ENCODE measurements at regions of chr16 and their contacts with region 1.

Region 1: DNA sequence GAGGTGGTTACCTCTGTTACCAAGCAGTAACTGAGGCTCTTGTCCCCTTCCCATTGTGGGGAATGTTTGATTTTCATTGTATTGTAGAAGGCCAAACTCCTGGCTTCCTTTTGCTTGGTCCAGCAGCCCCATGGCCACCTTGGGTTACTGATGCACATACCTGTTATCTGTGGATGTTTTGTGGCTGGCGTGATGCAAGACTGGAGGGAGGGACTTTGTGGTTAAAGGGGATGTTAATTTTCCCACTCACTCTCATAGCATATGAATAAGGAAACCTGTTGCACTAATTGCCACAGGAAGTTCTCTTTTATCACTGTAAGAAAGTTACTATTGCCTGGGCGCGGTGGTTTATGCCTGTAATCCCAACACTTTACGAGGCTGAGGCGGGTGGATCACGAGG is 168.6 kb upstream of the HS3ST4 start:
- DNase-seq: no peak
- ATAC-seq: no peak

Region 2: GRCh38 chr16:25481646-25482045 is 41.5 kb before region 1 on chr16:
- intact Hi-C with region 1: no loop called
- DNase-seq: no peak
- ATAC-seq: no peak

Region 3: GRCh38 chr16:25550647-25551046 is 27.5 kb after region 1 on chr16:
- intact Hi-C with region 1: loop called in 1 of 2 experiments (anchors 2 kb)
- DNase-seq: no peak
- ATAC-seq: no peak

Region 4: DNA sequence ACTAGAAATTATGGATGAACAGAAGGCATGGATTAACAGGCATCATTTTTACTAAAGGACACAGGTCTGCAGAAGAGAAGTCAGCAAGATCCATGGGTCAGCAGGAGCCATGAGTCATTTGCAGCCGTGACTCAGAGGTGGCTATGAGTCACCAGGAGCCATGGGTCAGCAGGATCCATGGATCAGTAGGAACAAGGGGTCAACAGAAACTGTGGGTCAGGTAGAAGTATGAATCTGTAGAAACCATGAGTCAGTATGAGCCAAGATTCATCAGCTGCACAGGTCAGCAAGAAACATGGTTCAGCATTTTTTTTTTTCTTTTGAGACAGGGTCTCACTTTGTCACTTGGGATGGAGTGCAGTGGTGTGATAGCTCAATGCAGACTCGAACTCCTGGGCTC is 110.4 kb after region 1 on chr16:
- intact Hi-C with region 1: no loop called
- DNase-seq: no peak
- ATAC-seq: no peak

Measured in left cardiac atrium (tissue), 4 donors.